ENCODE measurements at regions of chr1 and their contacts with region 1.

Region 1: GRCh38 chr1:244652699-244653466 is at the start of gene DESI2:
- DNase-seq: peak; percentile 100
- ATAC-seq: peak; percentile 96
- H3K4me3 ChIP-seq: peak within 1 kb of the TSS; percentile 86
- H3K27ac ChIP-seq: peak within 1 kb of the TSS; percentile 88
- H3K4me1 ChIP-seq: no peaks in the 10 kb centered on the region
- H3K27me3 ChIP-seq: no peaks in the 10 kb centered on the region
- CTCF ChIP-seq: peak; percentile 36; the same call in 1 of the 2 replicates
- POLR2A ChIP-seq: peak; percentile 98
- RAD21 ChIP-seq: peak; percentile 27; the same call in 1 of the 2 replicates
- total RNA-seq, gene DESI2: 43.6 and 69.4 TPM in 2 replicates

Region 2: GRCh38 chr1:244319283-244320132 is 333.4 kb before region 1 on chr1:
- CTCF ChIA-PET with region 1: no interaction called
- POLR2A ChIA-PET with region 1: no interaction called
- dilution Hi-C with region 1: no loop called
- in situ Hi-C with region 1: no loop called
- intact Hi-C with region 1: no loop called
- DNase-seq: peak; percentile 90
- ATAC-seq: peak; percentile 41
- H3K4me3 ChIP-seq: no peak overlapping the region
- H3K27ac ChIP-seq: peak overlapping the region; percentile 23
- H3K4me1 ChIP-seq: peaks cover 7% of the 10 kb centered on the region
- H3K27me3 ChIP-seq: no peaks in the 10 kb centered on the region
- CTCF ChIP-seq: no peak
- POLR2A ChIP-seq: no peak
- RAD21 ChIP-seq: no peak; the same call in 1 of the 2 replicates

Region 3: DNA sequence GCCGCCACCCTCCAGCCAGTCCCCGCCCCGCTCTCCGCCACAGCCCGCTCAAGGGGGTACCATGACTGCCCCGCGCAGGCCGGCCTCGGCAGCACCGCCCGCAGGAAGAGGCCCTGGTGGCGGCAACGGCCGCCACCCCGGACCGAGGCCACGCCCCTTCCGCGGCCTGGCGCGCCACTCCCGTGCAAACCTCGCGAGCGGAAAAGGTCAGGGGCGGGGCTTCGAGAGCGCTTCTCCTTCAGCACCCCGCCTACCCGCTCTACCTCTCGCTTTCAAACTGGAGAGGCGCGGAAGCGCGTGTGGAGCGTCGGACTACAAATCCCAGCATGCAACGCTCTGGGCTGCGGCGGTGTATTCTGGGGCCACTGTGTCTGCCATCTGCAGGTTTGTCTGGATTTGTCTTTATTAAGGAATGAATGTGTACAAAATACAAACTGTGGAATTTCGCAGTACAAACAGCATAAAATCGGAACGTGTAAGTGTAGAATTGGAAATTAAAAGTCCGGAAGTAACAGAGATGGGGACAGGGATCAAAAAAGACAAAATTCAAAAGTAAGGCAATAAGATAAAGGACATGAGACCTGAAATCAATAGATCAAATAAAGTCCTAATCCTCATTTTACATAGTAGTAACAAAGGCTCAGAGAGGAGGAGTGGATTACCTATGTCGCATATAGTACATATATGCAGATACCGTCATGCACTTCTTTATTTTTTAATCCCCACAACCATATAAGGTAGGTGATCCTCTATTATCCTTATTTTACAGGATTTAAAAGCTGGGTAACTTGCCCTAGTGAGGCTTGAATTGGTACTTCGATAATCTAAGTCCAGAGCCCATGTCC is 200.7 kb before region 1 on chr1:
- CTCF ChIA-PET with region 1: no interaction called
- POLR2A ChIA-PET with region 1: no interaction called
- dilution Hi-C with region 1: no loop called
- in situ Hi-C with region 1: no loop called
- intact Hi-C with region 1: loop called (anchors 5 kb)
- DNase-seq: peak; percentile 99
- ATAC-seq: peak; percentile 96
- H3K4me3 ChIP-seq: peak overlapping the region; percentile 16
- H3K27ac ChIP-seq: no peak overlapping the region
- H3K4me1 ChIP-seq: peaks cover 8% of the 10 kb centered on the region
- H3K27me3 ChIP-seq: no peaks in the 10 kb centered on the region
- CTCF ChIP-seq: peak; percentile 61
- POLR2A ChIP-seq: peak; percentile 7; the same call in 1 of the 2 replicates
- RAD21 ChIP-seq: peak; percentile 46

Region 4: DNA sequence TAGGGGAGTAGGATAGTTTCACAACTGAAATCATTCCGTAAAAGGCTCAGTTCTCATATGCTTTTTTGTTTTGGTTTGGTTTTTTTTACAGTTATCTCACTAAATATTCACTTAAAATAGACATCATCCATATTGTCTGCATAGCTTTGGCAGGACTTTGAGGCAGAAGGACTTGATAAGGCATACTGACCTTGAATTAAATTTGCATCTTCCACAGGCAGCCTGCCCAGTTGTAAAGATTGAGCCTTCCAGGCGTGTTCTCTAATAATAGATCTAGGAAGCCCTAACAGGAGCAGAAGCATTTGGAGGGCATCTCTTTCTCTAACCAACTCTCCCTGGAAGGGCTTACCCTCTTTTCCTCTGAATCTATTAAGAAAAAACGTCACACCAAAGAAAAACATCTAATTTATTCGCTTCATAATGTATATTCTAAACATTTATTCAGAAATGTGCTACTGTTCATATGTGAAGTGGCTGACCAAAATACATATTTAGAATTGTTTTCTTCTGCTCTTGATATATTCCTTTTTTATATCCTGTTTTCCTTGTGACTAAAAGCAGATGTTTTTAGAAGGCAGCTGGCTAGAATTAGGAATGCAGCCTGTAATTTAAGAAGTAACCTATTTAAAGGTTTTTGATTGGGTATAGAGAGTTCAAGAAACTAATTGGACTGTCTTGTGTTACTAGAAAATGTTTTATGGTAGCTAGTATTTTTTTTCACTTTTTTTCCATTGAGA is 20.2 kb after region 1 on chr1:
- CTCF ChIA-PET with region 1: interaction called, 3 read pairs
- POLR2A ChIA-PET with region 1: no interaction called
- dilution Hi-C with region 1: no loop called
- in situ Hi-C with region 1: no loop called
- intact Hi-C with region 1: loop called (anchors 2 kb)
- DNase-seq: peak; percentile 47
- ATAC-seq: peak; percentile 75
- H3K4me3 ChIP-seq: no peak overlapping the region
- H3K27ac ChIP-seq: no peak overlapping the region
- H3K4me1 ChIP-seq: peaks cover 4% of the 10 kb centered on the region; the same call in 1 of the 2 replicates
- H3K27me3 ChIP-seq: no peaks in the 10 kb centered on the region
- CTCF ChIP-seq: no peak
- POLR2A ChIP-seq: no peak
- RAD21 ChIP-seq: no peak

Region 5: DNA sequence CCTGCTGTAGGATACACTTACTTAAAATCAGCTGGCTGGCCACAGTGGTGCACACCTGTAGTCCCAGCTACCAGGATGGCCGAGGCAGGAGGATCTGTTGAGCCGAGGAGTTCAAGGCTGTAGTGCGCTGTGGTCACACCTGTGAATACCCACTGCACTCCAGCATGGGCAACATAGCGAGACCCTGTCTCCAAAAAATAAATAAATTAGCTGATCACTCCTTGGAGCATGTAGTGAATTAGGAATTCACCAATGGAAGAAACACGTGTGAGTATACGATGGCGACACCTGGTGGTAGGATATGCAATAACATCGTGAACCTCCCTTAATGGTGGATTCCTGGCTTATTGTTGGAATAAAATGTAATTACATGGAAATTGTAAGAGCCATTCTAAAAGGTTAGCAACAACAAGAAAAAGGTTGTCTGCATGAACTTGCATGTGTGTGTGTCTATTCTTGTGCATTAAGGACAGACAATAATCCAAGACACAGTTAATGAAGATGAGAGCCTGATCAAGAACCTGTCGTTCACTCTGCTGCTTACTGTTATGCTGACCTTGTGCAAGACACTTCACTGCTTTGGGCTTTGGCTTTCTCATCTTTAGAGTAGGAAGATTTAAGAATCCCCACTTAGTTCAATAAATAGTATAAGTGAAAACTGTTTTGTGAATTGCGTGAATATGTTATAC is 144.0 kb after region 1 on chr1:
- CTCF ChIA-PET with region 1: no interaction called
- POLR2A ChIA-PET with region 1: no interaction called
- dilution Hi-C with region 1: no loop called
- in situ Hi-C with region 1: no loop called
- intact Hi-C with region 1: loop called (anchors 1 kb)
- DNase-seq: peak; percentile 68
- ATAC-seq: peak; percentile 83
- H3K4me3 ChIP-seq: no peak overlapping the region
- H3K27ac ChIP-seq: no peak overlapping the region
- H3K4me1 ChIP-seq: peaks cover 3% of the 10 kb centered on the region
- H3K27me3 ChIP-seq: no peaks in the 10 kb centered on the region
- CTCF ChIP-seq: peak; percentile 86
- POLR2A ChIP-seq: no peak
- RAD21 ChIP-seq: peak; percentile 85

Region 6: GRCh38 chr1:244835276-244836134 is 182.6 kb after region 1 on chr1 and contains the start of gene COX20:
- CTCF ChIA-PET with region 1: no interaction called
- POLR2A ChIA-PET with region 1: no interaction called
- dilution Hi-C with region 1: no loop called
- in situ Hi-C with region 1: no loop called
- intact Hi-C with region 1: loop called (anchors 2 kb)
- DNase-seq: peak; percentile 88
- ATAC-seq: peak; percentile 75
- H3K4me3 ChIP-seq: peak within 1 kb of the TSS; percentile 68
- H3K27ac ChIP-seq: peak within 1 kb of the TSS; percentile 97
- H3K4me1 ChIP-seq: peaks cover 5% of the 10 kb centered on the region
- H3K27me3 ChIP-seq: no peaks in the 10 kb centered on the region
- CTCF ChIP-seq: no peak
- POLR2A ChIP-seq: peak; percentile 86
- RAD21 ChIP-seq: no peak
- total RNA-seq, gene COX20: 13.3 and 26.9 TPM in 2 replicates

Region 7: DNA sequence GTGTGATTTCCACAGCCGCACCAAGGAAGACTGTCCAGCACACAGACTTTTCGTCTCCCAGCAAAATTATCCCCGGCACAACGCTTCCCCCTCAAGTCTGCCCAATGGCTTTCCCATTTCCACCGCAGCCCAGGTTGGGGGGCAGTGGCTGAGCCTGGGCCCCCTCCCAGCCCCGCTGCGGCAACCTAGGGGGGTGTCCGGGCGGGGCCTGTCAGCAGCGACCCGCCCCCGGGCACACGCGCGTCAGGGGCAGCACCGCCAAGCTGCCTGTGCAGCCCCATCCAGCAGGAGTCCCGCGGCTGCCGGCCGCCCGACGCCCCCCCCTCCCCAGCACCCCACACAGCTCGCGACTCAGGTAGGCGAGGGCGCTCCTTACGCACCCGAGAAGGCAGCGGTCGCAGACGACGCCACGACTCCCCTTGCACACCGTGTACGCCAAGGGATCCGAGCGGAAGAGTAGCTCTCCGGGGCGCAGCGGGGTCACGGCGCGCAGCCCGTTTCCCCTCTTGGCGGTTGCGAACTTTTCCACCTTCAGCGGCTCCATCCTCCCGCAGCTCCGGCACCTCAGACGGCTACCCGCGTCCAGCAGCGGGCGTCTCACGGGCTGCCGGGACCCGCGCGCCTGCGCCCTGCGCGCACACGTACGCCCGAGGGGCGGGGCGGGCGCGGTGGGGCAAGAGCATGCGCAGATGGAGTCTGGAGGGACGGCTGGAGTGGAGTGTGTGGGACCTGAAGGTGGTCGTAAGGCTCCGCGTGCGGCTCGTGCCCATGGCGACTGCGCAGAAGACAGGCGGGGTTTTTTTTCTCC is 1854.0 kb after region 1 on chr1 and contains the start of gene SMYD3:
- CTCF ChIA-PET with region 1: no interaction called
- POLR2A ChIA-PET with region 1: interaction called, 14 read pairs
- dilution Hi-C with region 1: no loop called
- in situ Hi-C with region 1: no loop called
- intact Hi-C with region 1: no loop called
- DNase-seq: peak; percentile 66
- ATAC-seq: peak; percentile 97
- H3K4me3 ChIP-seq: peak within 1 kb of the TSS; percentile 98
- H3K27ac ChIP-seq: peak within 1 kb of the TSS; percentile 65
- H3K4me1 ChIP-seq: peaks cover 6% of the 10 kb centered on the region
- H3K27me3 ChIP-seq: no peaks in the 10 kb centered on the region
- CTCF ChIP-seq: peak; percentile 21; the same call in 1 of the 2 replicates
- POLR2A ChIP-seq: no peak
- RAD21 ChIP-seq: no peak
- total RNA-seq, gene SMYD3: 32.5 and 37.6 TPM in 2 replicates